ENCODE measurements at regions of chr2 and their contacts with region 1.

Region 1: DNA sequence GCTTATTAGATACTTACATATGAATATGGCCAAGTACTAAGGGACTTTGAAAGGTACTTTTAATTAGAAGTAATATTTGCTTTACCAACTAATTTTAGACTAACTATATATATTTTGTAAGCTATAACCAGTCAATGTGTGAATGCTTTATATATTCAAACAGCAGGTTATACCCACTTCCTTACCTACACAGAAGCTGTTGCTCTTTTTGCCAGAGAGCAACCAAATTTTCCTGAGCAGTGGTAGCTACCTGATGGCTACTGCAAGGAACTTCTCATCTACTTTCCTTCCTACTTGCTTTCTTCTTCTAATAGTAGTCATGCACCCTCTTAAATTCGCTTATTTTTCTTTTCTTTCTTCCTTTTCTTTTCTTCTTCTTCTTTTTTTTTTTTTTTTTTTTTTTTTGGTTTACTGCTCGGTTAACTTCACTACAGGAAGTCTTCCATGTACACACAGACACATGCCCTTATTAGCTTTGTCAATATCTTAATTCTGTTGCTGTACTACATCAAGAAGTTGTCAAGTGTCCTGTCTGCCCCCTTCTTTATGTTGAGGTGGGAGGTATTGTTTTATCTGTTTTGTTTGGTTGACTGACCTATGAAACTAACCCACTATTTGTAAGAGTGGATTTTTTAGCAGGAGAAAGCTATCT is 95.0 kb downstream of the EPC2 start:
- DNase-seq: no peak
- ATAC-seq: no peak
- H3K4me3 ChIP-seq: no peak overlapping the region
- H3K4me3 Mint-ChIP-seq: no peak overlapping the region
- H3K27ac ChIP-seq: no peak overlapping the region
- H3K27ac Mint-ChIP-seq: no peak overlapping the region
- H3K4me1 ChIP-seq: peaks cover 38% of the 10 kb centered on the region
- H3K4me1 Mint-ChIP-seq: peaks cover 77% of the 10 kb centered on the region
- H3K27me3 ChIP-seq: no peaks in the 10 kb centered on the region
- H3K27me3 Mint-ChIP-seq: no peaks in the 10 kb centered on the region
- CTCF ChIP-seq: no peak

Region 2: DNA sequence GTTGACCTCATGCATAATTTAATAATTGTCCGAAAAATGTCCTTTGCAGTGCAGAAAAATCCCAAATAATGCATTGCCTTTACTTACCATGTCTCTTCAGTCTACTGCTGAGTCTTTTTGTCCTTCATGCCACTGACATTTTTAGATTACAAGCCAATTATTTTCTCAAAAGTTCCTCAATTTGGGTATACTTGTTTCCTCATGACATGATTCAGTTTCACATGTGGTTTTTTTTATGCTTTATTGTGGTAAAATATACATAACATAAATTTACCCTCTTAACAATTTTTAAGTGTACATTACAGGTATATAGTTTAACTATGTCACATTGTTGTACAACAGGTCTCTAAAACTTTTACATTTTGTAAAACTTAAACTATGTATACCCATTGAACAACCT is 14.0 kb before region 1 on chr2:
- CTCF ChIA-PET with region 1: interaction called, 3 read pairs
- POLR2A ChIA-PET with region 1: no interaction called
- intact Hi-C with region 1: loop called in 1 of 2 experiments (anchors 2 kb)
- DNase-seq: peak in 1 of 9 experiments; percentile 12
- ATAC-seq: no peak
- H3K4me3 ChIP-seq: no peak overlapping the region
- H3K4me3 Mint-ChIP-seq: no peak overlapping the region
- H3K27ac ChIP-seq: no peak overlapping the region
- H3K27ac Mint-ChIP-seq: no peak overlapping the region
- H3K4me1 ChIP-seq: peaks cover 20% of the 10 kb centered on the region
- H3K4me1 Mint-ChIP-seq: peaks cover 72% of the 10 kb centered on the region
- H3K27me3 ChIP-seq: no peaks in the 10 kb centered on the region
- H3K27me3 Mint-ChIP-seq: no peaks in the 10 kb centered on the region
- CTCF ChIP-seq: no peak

Region 3: GRCh38 chr2:148756396-148756931 is 16.9 kb after region 1 on chr2:
- CTCF ChIA-PET with region 1: interaction called, 3 read pairs
- POLR2A ChIA-PET with region 1: interaction called, 3 read pairs
- intact Hi-C with region 1: loop called in 1 of 2 experiments (anchors 2 kb)
- DNase-seq: no peak
- ATAC-seq: no peak
- H3K4me3 ChIP-seq: no peak overlapping the region
- H3K4me3 Mint-ChIP-seq: no peak overlapping the region
- H3K27ac ChIP-seq: no peak overlapping the region
- H3K27ac Mint-ChIP-seq: no peak overlapping the region
- H3K4me1 ChIP-seq: no peaks in the 10 kb centered on the region
- H3K4me1 Mint-ChIP-seq: peaks cover 32% of the 10 kb centered on the region
- H3K27me3 ChIP-seq: no peaks in the 10 kb centered on the region
- H3K27me3 Mint-ChIP-seq: no peaks in the 10 kb centered on the region
- CTCF ChIP-seq: no peak

Region 4: DNA sequence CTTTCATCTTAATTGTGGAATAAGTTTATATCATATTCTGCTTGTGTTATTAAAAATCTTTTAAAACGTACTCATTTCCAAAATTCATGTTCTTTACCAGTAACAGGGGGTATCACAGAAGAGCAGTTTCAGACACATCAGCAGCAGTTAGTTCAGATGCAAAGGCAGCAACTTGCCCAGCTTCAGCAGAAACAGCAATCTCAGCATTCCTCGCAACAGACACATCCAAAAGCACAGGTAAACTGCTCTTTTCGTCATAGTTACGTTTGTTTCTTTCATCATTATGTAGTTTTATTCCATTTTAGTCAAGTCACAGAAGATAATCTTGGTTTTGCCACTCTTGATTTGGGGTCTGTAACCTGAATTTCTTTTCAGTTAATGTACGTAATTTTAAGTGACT is 42.0 kb after region 1 on chr2:
- CTCF ChIA-PET with region 1: interaction called, 3 read pairs
- POLR2A ChIA-PET with region 1: no interaction called
- intact Hi-C with region 1: loop called in 1 of 2 experiments (anchors 5 kb)
- DNase-seq: no peak
- ATAC-seq: no peak
- H3K4me3 ChIP-seq: no peak overlapping the region
- H3K4me3 Mint-ChIP-seq: no peak overlapping the region
- H3K27ac ChIP-seq: no peak overlapping the region
- H3K27ac Mint-ChIP-seq: no peak overlapping the region
- H3K4me1 ChIP-seq: no peaks in the 10 kb centered on the region
- H3K4me1 Mint-ChIP-seq: peaks cover 14% of the 10 kb centered on the region
- H3K27me3 ChIP-seq: no peaks in the 10 kb centered on the region
- H3K27me3 Mint-ChIP-seq: no peaks in the 10 kb centered on the region
- CTCF ChIP-seq: no peak

Measured in CD8-positive, alpha-beta T cell (primary cell).